ENCODE measurements at regions of chr20 and their contacts with region 1.

Region 1: GRCh38 chr20:40741507-40742106 is 52.6 kb upstream of the MAFB start:
- DNase-seq: peak in 1 of 4 donors; percentile 39
- ATAC-seq: peak; percentile 73
- H3K4me3 ChIP-seq: no peak overlapping the region
- H3K27ac ChIP-seq: no peak overlapping the region
- H3K4me1 ChIP-seq: peaks cover 0 to 3% of the 10 kb centered on the region in 2 donors
- H3K27me3 ChIP-seq: no peaks in the 10 kb centered on the region
- CTCF ChIP-seq: peak; percentile 55 to 62

Region 2: GRCh38 chr20:40945754-40946450 is 204.3 kb after region 1 on chr20:
- intact Hi-C with region 1: loop called in 1 of 2 experiments (anchors 10 kb)
- DNase-seq: peak in 3 of 4 donors; percentile 53 to 82 (median 61)
- ATAC-seq: peak; percentile 93
- H3K4me3 ChIP-seq: no peak overlapping the region
- H3K27ac ChIP-seq: no peak overlapping the region
- H3K4me1 ChIP-seq: peaks cover 0 to 9% of the 10 kb centered on the region in 2 donors
- H3K27me3 ChIP-seq: no peaks in the 10 kb centered on the region
- CTCF ChIP-seq: peak; percentile 29 to 51

Measured in left lung (tissue), 14 donors.